Naive thymus-derived CD4-positive, alpha-beta T cell (primary cell): ENCODE measurements at regions of chr5 and their contacts with region 1.

Region 1: GRCh38 chr5:170235876-170236864 is 3.4 kb downstream of the C5orf58 start:
- DNase-seq: no peak
- ATAC-seq: no peak
- H3K4me3 ChIP-seq: no peak overlapping the region
- H3K4me3 Mint-ChIP-seq: no peak overlapping the region
- H3K27ac ChIP-seq: no peak overlapping the region
- H3K27ac Mint-ChIP-seq: peak overlapping the region in 8 of 9 donors; percentile 6 to 83 (median 30)
- H3K4me1 ChIP-seq: no peaks in the 10 kb centered on the region
- H3K4me1 Mint-ChIP-seq: peaks cover 0 to 26% (median 18%) of the 10 kb centered on the region in 7 donors
- H3K27me3 ChIP-seq: no peaks in the 10 kb centered on the region
- H3K27me3 Mint-ChIP-seq: no peaks in the 10 kb centered on the region

Region 2: GRCh38 chr5:168987543-168988300 is 1248.4 kb before region 1 on chr5:
- CTCF ChIA-PET with region 1: no interaction called
- POLR2A ChIA-PET with region 1: no interaction called
- intact Hi-C with region 1: no loop called
- DNase-seq: peak in 7 of 9 donors; percentile 8 to 54 (median 13)
- ATAC-seq: no peak
- H3K4me3 ChIP-seq: no peak overlapping the region
- H3K4me3 Mint-ChIP-seq: no peak overlapping the region
- H3K27ac ChIP-seq: no peak overlapping the region
- H3K27ac Mint-ChIP-seq: no peak overlapping the region
- H3K4me1 ChIP-seq: peaks cover 0 to 4% of the 10 kb centered on the region in 2 donors
- H3K4me1 Mint-ChIP-seq: no peaks in the 10 kb centered on the region
- H3K27me3 ChIP-seq: peaks cover 0 to 3% of the 10 kb centered on the region in 2 donors
- H3K27me3 Mint-ChIP-seq: peaks cover 3 to 23% (median 16%) of the 10 kb centered on the region in 5 donors

Region 3: DNA sequence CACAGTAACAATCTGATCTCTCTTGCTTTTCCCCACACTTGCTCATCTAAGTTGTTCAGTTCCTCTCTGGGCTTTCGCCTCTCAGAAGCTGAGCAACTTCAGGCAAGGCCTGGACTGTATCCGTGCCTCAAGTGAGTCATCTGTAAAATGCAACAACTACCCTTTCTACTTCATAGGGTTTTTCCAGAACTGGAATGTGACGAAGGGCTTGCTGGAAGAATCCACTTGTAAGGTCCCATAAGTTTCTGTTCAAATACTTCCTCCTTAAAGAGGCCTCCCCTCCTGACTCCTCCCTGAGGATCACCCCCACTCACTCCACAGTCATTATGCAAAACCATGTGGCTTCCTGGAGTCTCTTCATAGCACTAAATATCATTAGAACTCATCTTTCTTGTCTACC is 238.4 kb before region 1 on chr5:
- CTCF ChIA-PET with region 1: no interaction called
- POLR2A ChIA-PET with region 1: no interaction called
- intact Hi-C with region 1: no loop called
- DNase-seq: no peak
- ATAC-seq: no peak
- H3K4me3 ChIP-seq: no peak overlapping the region
- H3K4me3 Mint-ChIP-seq: no peak overlapping the region
- H3K27ac ChIP-seq: no peak overlapping the region
- H3K27ac Mint-ChIP-seq: peak overlapping the region in 2 of 9 donors; percentile 6 to 30
- H3K4me1 ChIP-seq: no peaks in the 10 kb centered on the region
- H3K4me1 Mint-ChIP-seq: peaks cover 0 to 8% (median 0%) of the 10 kb centered on the region in 7 donors
- H3K27me3 ChIP-seq: no peaks in the 10 kb centered on the region
- H3K27me3 Mint-ChIP-seq: no peaks in the 10 kb centered on the region

Region 4: DNA sequence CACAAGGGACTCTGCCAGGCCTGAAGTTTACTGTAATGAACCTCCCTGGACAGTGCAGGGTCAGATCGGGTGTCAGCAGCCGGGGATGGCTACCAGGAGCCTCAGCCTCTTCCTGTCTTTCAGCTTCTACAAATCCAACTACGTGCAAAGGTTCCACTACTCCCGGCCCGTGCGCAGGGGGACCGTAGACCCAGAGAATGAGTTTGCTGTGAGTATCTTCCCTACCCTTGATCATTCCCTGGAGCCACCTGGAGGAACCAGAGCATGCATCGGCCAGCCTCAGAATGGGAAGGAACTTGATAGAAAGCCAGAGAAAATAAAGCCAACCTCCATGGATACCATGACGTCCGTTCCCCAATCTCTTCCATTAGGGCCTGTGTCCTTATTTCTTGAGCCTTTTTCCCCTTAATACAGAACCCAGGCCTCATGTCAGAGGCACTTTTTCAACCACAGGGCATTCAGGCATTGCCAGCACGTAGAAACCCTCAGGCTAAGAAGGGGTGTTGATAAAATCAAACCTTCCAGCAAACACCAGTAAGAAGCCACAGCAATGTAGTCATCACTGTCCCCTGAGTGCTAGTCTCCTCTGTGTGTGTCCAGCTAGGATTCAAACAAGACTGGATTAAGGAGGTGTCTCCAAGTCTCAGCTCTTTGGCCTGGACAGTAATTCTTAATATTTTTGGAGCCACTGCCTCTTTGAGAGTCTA is 179.5 kb before region 1 on chr5:
- CTCF ChIA-PET with region 1: no interaction called
- POLR2A ChIA-PET with region 1: no interaction called
- intact Hi-C with region 1: no loop called
- DNase-seq: no peak
- ATAC-seq: no peak
- H3K4me3 ChIP-seq: no peak overlapping the region
- H3K4me3 Mint-ChIP-seq: no peak overlapping the region
- H3K27ac ChIP-seq: no peak overlapping the region
- H3K27ac Mint-ChIP-seq: no peak overlapping the region
- H3K4me1 ChIP-seq: no peaks in the 10 kb centered on the region
- H3K4me1 Mint-ChIP-seq: no peaks in the 10 kb centered on the region
- H3K27me3 ChIP-seq: no peaks in the 10 kb centered on the region
- H3K27me3 Mint-ChIP-seq: no peaks in the 10 kb centered on the region

Region 5: DNA sequence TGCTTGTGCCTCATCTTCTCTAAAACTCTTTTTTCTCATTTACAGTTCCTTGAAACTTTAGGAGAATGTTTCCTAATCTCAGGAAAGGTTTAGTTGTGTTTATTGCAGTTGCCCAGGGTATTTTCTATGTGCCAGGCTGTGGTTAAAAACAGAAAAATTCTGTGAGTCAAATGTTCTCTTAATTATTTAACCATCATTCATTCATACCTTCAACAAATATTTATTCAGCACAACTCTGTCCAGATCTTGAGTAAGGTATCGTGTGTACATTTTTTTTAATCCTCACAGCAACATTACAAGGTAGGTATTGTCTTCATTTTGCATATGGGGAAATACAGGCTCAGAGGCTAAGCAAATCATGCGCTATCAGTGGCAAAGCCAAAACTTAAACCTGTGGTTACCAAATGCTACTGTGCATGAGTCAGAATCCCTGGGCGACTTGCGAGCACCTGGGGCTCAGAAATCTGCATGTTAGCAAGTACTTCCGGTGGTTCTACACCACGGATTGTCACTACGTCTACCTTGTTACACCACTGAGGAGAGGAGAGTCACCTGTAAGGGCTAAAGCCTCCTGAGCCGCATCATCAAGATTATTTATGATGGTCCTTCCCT is 17.8 kb after region 1 on chr5:
- CTCF ChIA-PET with region 1: interaction called, 4 read pairs
- POLR2A ChIA-PET with region 1: no interaction called
- intact Hi-C with region 1: loop called in 1 of 2 experiments (anchors 2 kb)
- DNase-seq: peak in 8 of 9 donors; percentile 41 to 76 (median 56)
- ATAC-seq: peak; percentile 95
- H3K4me3 ChIP-seq: no peak overlapping the region
- H3K4me3 Mint-ChIP-seq: peak overlapping the region in 8 of 10 donors; percentile 5 to 61 (median 40)
- H3K27ac ChIP-seq: peak overlapping the region; percentile 53
- H3K27ac Mint-ChIP-seq: peak overlapping the region; percentile 28 to 97 (median 75)
- H3K4me1 ChIP-seq: peaks cover 19 to 21% of the 10 kb centered on the region in 2 donors
- H3K4me1 Mint-ChIP-seq: peaks cover 20 to 67% (median 63%) of the 10 kb centered on the region in 7 donors
- H3K27me3 ChIP-seq: no peaks in the 10 kb centered on the region
- H3K27me3 Mint-ChIP-seq: no peaks in the 10 kb centered on the region

Region 6: GRCh38 chr5:171137768-171138525 is 901.8 kb after region 1 on chr5:
- CTCF ChIA-PET with region 1: no interaction called
- POLR2A ChIA-PET with region 1: no interaction called
- intact Hi-C with region 1: no loop called
- DNase-seq: no peak
- ATAC-seq: no peak
- H3K4me3 ChIP-seq: no peak overlapping the region
- H3K4me3 Mint-ChIP-seq: no peak overlapping the region
- H3K27ac ChIP-seq: no peak overlapping the region
- H3K27ac Mint-ChIP-seq: no peak overlapping the region
- H3K4me1 ChIP-seq: no peaks in the 10 kb centered on the region
- H3K4me1 Mint-ChIP-seq: no peaks in the 10 kb centered on the region
- H3K27me3 ChIP-seq: no peaks in the 10 kb centered on the region
- H3K27me3 Mint-ChIP-seq: peaks cover 2 to 9% (median 5%) of the 10 kb centered on the region in 5 donors